Left ventricle myocardium superior (tissue), 1 donor: ENCODE measurements at regions of chr9 and their contacts with region 1.

Region 1: GRCh38 chr9:20941174-20941690 is 90.2 kb downstream of the HACD4 start:
- DNase-seq: peak; percentile 47
- ATAC-seq: peak; percentile 89

Region 2: DNA sequence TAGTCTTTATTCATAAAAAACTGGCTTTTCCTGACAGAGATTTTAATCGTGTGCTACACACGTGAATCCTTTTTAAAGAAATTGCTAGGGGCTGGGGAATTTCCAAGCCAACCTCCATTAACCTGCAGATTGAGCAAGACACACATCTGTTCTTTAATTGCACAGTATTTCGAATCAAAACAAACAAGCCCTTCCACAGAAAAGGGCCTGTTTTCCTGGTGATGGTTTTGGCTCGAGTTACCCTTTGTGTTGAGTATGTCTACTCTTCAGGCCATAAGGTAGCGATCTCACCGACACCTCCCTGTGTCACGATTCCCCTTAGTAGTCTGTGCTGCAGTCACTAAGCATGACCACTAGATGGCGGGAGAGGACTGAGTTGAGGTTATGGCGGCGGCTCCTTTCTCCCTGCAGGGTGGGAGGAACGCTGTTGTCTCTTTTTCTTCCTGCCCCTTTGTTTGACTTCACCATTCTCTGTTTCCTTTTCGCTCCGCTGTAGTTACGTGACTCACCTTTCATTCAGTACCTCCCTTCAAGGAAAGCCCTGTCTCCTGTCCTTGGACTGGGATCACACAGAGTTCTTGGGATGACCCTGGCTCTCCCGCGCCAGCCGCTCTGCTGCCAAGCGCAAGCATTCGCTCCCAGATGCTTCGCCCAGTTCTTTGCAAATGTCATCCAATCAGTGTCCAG is 1015.3 kb before region 1 on chr9:
- intact Hi-C with region 1: loop called (anchors 5 kb)
- DNase-seq: peak; percentile 58
- ATAC-seq: peak; percentile 98

Region 3: DNA sequence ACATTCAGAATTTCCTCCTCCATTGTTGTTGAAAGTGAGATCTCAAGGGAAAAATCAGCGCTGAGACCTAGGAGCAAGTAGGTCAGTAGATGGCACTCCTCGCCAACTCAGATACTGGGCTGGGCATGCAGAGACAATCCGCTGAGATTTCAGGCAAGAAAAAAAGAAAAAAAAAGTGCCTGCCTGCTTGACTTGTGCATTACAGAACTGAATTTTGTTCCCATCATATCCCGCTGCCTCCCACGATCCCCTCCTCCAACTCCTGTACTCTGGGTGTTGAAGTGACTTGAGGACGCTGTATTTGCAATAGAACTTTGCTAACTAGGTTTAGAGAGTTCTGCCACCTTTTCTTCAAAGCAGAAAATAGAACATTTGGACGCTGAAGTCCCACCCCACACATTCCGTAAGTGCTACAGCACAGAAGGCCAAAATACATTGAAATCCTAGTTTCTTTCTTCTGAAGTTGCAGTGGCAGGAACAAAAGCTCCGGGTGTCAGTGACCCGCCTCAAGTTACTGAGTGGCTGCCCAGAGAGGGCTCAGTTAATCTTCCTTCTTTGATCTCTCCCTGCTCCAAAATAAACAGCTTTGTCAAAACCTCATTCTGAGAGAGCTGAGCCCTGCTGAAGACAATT is 584.7 kb before region 1 on chr9:
- intact Hi-C with region 1: loop called (anchors 2 kb)
- DNase-seq: peak; percentile 50
- ATAC-seq: peak; percentile 91

Region 4: GRCh38 chr9:20622330-20623020 is 318.8 kb before region 1 on chr9 and contains the start of gene MLLT3:
- intact Hi-C with region 1: loop called (anchors 10 kb)
- DNase-seq: peak; percentile 98
- ATAC-seq: peak; percentile 95
- total RNA-seq, gene MLLT3: 15.4 TPM

Region 5: DNA sequence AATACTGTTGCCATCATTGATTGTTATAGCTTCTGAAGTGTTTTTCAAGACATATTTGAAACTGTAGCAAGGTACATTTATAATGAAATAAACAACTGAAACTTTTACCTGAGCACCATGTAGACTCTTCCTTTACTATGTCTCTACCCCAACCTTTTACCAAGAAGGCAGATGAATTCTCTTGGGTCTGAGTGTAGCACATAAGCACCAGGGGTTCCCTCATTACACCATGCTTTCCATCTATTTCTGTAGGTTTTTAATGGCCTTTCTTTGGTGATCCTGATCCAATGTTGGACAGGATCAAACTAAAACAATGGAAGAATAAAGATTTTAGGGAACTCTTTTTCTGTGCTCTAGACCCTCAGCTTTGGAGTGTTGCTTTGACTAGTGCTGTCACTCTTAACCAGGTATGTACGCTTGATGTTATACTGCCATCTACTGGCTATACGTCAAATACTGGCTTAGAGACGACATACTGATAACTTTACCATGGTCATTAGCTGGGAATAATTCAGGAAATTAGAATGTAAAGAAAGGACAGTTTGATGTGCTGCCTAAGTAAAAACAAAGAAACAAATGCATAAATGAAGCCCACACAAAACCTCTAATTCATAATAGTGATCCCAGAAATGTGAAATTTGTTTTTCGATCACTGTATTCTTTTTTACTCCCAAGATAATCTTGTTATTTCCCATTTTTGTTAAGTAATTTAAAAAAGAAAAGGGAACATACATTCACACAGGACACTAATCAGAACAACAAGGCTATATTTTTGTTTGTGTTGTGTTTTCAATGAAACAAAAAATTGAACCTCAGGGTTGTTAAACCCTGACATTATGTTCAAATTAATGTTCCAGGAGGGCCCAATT is 169.7 kb after region 1 on chr9:
- intact Hi-C with region 1: loop called (anchors 10 kb)
- DNase-seq: no peak
- ATAC-seq: peak; percentile 80